Esophagus squamous epithelium (tissue), 5 donors: ENCODE measurements at regions of chr2 and their contacts with region 1.

Region 1: DNA sequence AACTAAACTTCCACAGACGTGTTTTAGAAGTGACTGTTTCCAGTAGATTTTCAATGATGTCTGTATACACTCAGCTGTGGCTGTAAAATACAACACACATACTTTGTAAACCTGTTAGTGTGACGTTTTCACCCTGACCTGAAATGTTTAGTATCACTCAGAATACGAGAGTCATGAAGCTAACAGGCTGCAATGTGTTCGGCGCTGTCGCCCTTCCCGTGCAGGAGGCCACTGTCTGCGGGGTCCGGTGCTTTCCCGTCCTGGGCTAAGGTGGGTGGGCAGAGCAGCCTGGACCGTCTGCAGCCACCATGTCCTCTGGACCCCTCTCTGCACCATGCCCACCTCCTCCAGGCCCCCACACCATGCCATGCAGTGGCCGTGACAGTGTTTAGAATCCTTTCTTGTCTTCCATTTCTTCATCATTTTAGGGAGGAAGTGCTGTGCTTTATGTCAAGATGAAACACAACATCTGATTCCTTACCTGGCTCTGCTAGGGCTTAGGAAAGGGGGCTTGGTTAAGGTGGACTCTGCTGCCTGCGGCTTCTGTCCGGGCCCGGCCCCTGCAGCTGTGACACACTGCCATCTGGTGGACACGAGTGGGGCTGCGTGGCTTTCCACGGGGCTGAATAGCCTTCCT is 53.8 kb upstream of the RBM44 start:
- DNase-seq: no peak
- H3K4me3 ChIP-seq: no peak overlapping the region
- H3K27ac ChIP-seq: peak overlapping the region in 3 of 4 donors; percentile 49 to 77 (median 76)
- H3K4me1 ChIP-seq: peaks cover 6 to 55% (median 25%) of the 10 kb centered on the region in 3 donors
- H3K27me3 ChIP-seq: no peaks in the 10 kb centered on the region
- CTCF ChIP-seq: peak; percentile 97 to 99 (median 98)
- POLR2A ChIP-seq: no peak

Region 2: DNA sequence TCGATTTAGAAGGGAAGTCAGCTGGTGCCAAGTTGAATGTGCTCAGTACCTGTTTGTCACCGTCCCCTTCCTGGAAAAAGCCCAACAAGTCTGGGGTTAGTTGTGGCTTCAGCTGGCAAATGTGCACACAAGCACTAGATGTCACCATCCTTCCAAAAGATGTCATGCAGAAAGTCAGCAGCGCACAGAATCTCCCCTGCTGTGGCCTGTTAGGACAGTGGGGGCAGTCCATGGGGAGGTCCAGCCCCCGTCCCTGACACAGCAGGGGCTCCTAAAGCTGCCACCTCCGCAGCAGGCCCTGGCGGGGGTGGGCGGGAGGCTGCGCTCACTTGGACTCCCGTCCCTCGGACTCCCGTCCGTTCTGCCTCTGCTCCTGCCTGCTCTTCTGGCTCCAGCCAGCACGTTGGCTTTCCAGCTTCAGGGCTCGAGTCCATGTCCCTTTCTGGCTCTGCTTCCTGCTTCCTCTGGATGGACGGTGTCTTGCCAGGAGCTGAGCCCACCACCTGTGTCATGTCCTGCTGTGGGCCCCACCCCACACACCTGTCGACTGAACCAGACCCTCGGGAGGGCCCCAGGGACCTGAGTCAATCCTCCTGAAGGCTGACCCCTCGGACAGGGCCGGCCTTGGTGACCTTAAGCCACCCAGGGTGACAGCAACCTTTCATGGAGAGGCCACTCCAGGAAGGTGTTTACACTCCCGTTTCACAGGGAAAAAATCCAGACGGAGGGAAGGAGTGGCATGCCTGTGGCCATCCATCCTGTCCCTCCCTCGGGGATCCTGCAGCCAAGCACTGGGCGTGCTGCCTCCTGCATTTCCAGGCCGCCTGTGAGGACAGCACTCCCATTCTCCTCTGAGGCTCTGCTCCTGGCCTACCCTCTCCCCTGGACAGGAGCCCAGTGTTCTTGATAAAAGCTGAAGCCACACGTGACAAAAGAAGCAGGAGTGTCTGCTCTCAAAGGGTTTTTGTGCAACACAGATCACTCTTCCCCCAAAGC is 162.7 kb before region 1 on chr2:
- intact Hi-C with region 1: loop called (anchors 10 kb)
- DNase-seq: no peak
- H3K4me3 ChIP-seq: peak overlapping the region in 1 of 4 donors; percentile 55
- H3K27ac ChIP-seq: peak overlapping the region; percentile 50 to 79 (median 55)
- H3K4me1 ChIP-seq: peaks cover 4 to 18% (median 10%) of the 10 kb centered on the region in 3 donors
- H3K27me3 ChIP-seq: no peaks in the 10 kb centered on the region
- CTCF ChIP-seq: peak in 4 of 6 experiments; percentile 17 to 37 (median 24)
- POLR2A ChIP-seq: no peak

Region 3: GRCh38 chr2:237673126-237674001 is 71.4 kb before region 1 on chr2:
- intact Hi-C with region 1: loop called (anchors 2 kb)
- DNase-seq: peak; percentile 60
- H3K4me3 ChIP-seq: peak overlapping the region; percentile 18 to 60 (median 41)
- H3K27ac ChIP-seq: peak overlapping the region; percentile 72 to 90 (median 88)
- H3K4me1 ChIP-seq: peaks cover 18 to 75% (median 39%) of the 10 kb centered on the region in 3 donors
- H3K27me3 ChIP-seq: no peaks in the 10 kb centered on the region
- CTCF ChIP-seq: peak; percentile 73 to 93 (median 89)
- POLR2A ChIP-seq: peak in 1 of 4 donors; percentile 13

Region 4: GRCh38 chr2:237911363-237912017 is 166.8 kb after region 1 on chr2:
- intact Hi-C with region 1: no loop called
- DNase-seq: no peak
- H3K4me3 ChIP-seq: no peak overlapping the region
- H3K27ac ChIP-seq: no peak overlapping the region
- H3K4me1 ChIP-seq: no peaks in the 10 kb centered on the region
- H3K27me3 ChIP-seq: no peaks in the 10 kb centered on the region
- CTCF ChIP-seq: no peak
- POLR2A ChIP-seq: no peak